Activated B cell treated with CpG ODN at 0.5 μM for 24 hours (primary cell): ENCODE measurements at regions of chr11 and their contacts with region 1.

Region 1: GRCh38 chr11:62905927-62906531 is 15.1 kb downstream of the CHRM1 start:
- DNase-seq: peak; percentile 63
- ATAC-seq: peak; percentile 69
- H3K4me3 Mint-ChIP-seq: no peak overlapping the region
- H3K27ac Mint-ChIP-seq: no peak overlapping the region
- H3K4me1 Mint-ChIP-seq: no peaks in the 10 kb centered on the region
- H3K27me3 Mint-ChIP-seq: peaks cover 25% of the 10 kb centered on the region
- CTCF ChIP-seq: peak; percentile 91

Region 2: GRCh38 chr11:62747475-62748160 is 158.4 kb before region 1 on chr11:
- CTCF ChIA-PET with region 1: no interaction called
- POLR2A ChIA-PET with region 1: no interaction called
- intact Hi-C with region 1: no loop called
- DNase-seq: no peak
- ATAC-seq: no peak
- H3K4me3 Mint-ChIP-seq: no peak overlapping the region
- H3K27ac Mint-ChIP-seq: no peak overlapping the region
- H3K4me1 Mint-ChIP-seq: peaks cover 5% of the 10 kb centered on the region
- H3K27me3 Mint-ChIP-seq: no peaks in the 10 kb centered on the region
- CTCF ChIP-seq: no peak

Region 3: DNA sequence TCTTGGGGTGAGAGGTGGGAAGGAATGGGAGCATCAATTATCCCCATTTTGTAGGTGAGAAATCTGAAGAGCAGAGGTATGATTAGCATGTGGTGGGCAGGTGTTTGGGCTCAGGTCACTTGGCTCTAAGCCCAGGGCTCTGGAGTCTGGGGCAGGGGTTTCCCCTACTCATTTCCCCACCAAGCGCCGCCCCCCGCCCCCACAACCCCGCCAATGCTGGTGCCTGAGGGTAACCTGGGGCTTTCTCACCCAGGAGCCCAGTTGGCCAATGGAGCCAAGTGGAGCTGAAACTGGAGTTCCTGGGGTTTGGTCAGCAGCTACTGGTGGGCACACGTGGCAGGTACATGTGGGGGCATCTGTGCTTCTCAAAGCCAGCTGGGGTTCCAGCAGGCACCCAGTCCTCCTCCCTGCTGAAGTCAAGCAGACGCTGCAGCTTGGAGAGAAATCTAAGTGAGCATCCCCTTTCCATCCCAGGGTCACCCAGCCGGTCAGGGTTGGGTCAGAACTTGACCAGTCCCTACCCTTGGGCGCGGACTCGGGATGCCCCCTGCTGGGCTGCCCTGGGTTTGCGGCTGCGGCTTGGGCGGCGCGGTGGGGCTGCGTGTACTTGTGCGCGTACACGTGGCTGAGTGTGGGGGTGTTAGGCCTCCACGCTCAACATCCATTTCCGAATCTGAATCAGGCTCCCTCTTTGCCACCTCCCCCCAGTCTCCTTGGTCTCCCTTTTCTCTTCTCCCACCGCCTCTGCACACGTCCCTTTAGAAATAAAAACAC is 16.8 kb after region 1 on chr11:
- CTCF ChIA-PET with region 1: interaction called, 10 read pairs
- POLR2A ChIA-PET with region 1: interaction called, 3 read pairs
- intact Hi-C with region 1: no loop called
- DNase-seq: no peak
- ATAC-seq: no peak
- H3K4me3 Mint-ChIP-seq: peak overlapping the region; percentile 13
- H3K27ac Mint-ChIP-seq: no peak overlapping the region
- H3K4me1 Mint-ChIP-seq: peaks cover 35% of the 10 kb centered on the region
- H3K27me3 Mint-ChIP-seq: peaks cover 46% of the 10 kb centered on the region
- CTCF ChIP-seq: no peak

Region 4: DNA sequence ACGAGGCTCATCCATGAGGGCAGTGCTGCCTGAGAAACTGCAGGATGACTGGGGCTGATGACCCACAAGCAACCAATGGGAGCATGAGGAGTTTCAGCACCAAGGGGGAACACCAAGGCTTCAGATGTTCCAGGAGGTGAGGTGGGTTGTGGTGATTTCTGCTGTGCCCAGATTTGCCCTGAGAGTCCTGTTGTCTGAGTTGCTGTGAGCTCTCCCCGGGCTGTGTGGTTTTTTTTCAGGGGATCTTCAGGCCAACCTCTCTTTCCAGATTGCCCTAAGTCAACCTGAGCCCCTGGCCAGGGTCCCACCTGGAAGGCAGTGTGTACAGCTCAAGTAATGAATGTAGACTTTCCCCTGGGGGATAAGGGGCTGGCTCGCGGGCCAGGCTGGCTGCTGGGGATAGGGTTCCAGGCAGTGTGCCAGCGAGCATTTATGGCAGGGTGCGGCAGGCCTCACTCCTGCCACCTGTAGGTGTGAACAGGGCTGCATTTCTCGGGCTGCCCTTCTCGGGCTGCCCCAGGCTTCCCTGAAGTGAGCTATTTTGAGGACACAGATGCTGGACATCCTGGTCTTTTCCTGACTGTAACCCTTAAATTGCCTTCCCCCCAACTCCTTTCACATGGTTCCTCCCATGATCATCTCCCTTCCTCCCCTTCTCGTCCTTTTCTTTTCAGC is 69.0 kb after region 1 on chr11:
- CTCF ChIA-PET with region 1: interaction called, 49 read pairs
- POLR2A ChIA-PET with region 1: no interaction called
- intact Hi-C with region 1: loop called (anchors 1 kb)
- DNase-seq: no peak
- ATAC-seq: no peak
- H3K4me3 Mint-ChIP-seq: no peak overlapping the region
- H3K27ac Mint-ChIP-seq: no peak overlapping the region
- H3K4me1 Mint-ChIP-seq: no peaks in the 10 kb centered on the region
- H3K27me3 Mint-ChIP-seq: peaks cover 28% of the 10 kb centered on the region
- CTCF ChIP-seq: no peak

Region 5: GRCh38 chr11:63023841-63024648 is 118.0 kb after region 1 on chr11:
- CTCF ChIA-PET with region 1: interaction called, 227 read pairs
- POLR2A ChIA-PET with region 1: no interaction called
- intact Hi-C with region 1: loop called (anchors 1 kb)
- DNase-seq: peak; percentile 75
- ATAC-seq: peak; percentile 94
- H3K4me3 Mint-ChIP-seq: no peak overlapping the region
- H3K27ac Mint-ChIP-seq: no peak overlapping the region
- H3K4me1 Mint-ChIP-seq: peaks cover 4% of the 10 kb centered on the region
- H3K27me3 Mint-ChIP-seq: peaks cover 29% of the 10 kb centered on the region
- CTCF ChIP-seq: peak; percentile 99

Region 6: DNA sequence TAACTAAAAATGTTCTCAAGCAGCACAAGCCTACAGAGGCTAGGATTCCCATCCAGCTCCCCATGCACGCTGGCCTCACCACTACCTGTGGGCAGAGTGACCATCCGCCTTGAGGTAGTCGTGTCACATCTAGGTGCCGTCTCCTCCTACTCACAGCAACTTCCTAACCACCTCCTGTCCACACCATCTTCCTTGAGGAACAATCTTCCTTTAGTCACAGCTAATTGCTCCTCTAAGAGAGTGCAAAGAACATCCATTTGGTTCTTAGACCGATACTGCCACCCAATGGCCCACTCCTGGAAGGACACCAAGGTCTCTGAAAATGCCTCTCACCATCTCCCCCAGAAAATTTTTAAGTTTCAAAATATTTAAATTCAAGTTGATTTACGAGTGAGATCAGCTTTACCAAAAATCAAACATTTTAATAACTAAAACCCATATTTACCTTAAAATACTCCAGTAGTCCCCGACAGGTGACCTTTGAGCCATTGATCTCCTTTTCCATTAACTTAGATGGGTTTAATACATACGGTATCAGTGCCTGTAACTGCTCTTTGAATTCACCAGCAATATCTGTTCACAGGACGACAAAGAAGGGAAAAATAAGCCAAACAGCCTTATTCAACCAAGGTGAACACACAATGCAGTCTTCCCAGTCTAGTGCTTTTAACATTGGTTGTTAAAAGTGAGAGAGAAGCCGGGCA is 729.9 kb after region 1 on chr11:
- CTCF ChIA-PET with region 1: no interaction called
- POLR2A ChIA-PET with region 1: no interaction called
- intact Hi-C with region 1: loop called (anchors 10 kb)
- DNase-seq: peak; percentile 23
- ATAC-seq: peak; percentile 72
- H3K4me3 Mint-ChIP-seq: no peak overlapping the region
- H3K27ac Mint-ChIP-seq: no peak overlapping the region
- H3K4me1 Mint-ChIP-seq: peaks cover 9% of the 10 kb centered on the region
- H3K27me3 Mint-ChIP-seq: no peaks in the 10 kb centered on the region
- CTCF ChIP-seq: no peak